ENCODE measurements at regions of chr4 and their contacts with region 1.

Region 1: DNA sequence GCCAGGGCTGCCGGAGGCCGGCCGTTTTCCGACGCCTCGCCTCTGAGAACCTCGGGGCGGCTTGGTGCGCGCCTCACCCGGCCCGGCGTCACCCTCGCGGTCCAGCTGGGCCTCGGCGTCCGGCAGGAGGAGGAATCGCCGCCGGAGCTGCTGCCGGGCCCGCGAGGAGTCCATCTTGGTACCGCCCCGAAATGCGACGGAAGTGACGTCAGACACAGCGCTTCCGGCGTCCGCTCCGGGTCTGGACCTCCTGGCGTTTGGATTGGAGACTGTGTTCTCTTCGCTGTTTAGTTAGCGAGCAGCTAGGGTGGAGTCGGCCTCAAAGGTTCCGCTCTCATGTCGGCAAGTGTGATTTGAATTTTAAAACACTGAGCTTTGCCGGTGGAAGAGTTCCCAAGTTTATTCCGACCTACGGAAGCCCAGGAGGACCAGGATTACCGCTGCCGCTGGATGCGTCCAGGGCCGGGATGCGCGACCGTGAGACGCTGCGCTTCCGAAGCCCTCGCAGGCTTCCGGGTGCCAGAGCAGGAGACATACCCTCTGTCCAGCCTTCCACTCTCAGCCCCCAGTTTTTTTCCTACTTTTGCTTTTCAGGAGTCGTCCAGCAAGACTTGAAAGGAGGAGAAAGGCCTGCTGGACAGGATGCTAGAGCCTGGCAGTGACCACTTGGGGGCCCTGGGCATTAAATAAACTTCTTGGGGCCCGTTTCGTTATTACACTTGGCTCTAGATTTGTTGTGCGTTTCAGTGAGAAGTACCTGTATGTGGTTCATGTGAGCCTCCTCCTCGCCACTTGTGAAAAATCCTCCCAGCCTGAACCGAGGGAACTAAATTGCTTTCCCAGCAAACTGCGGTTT is at the start of gene TMEM128:
- DNase-seq: peak; percentile 98
- H3K4me3 Mint-ChIP-seq: peak within 1 kb of the TSS; percentile 92
- H3K27ac Mint-ChIP-seq: peak within 1 kb of the TSS; percentile 95
- H3K4me1 Mint-ChIP-seq: peaks cover 20% of the 10 kb centered on the region
- H3K27me3 Mint-ChIP-seq: no peaks in the 10 kb centered on the region
- total RNA-seq, gene TMEM128: 18.5 and 20.7 TPM in 2 replicates

Region 2: DNA sequence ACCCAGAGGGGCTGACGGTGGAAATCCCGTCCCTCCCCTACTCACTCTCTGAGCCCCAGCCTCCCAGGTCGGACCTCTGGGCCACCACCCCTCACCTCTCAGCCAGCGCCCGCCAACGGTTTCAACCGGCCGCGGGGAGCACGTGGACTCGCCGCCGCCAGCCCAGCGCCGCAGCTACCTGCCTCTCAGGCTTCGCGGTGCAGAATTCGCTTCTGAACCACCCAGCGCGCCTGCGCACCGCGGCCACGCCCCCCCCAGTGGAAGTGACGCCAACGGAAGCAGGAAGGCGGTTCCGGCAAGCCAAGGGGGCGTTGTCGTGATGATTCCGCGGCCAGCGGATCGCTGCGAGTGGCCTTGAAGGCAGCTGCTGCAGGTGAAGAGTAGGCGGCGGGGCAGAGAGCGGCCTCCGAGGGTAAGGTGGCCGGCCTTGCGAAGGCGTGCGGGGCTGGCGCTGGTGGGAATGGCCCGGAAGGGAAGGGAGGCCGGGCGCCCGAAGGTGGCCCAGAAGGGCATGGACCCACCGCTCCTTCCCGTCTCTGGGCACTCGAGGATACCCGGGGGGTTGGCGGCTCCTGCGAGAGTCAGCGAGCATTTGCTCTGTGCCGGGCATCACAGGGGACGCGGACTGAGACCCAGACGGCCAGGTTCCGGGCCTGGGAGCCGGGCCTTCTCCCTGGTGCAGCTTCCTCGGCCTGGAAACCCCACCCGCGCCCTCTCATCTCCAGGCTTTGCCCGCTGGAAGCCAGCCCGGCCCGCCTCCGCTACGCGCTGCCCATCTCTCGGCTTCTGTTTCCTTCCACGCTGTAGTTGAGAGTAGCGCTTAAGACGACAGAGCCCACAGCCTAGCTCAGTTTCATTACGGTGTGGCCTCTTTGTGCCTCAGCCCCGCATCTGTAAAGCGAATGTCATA is 41.9 kb after region 1 on chr4 and contains the starts of genes LYAR and ZBTB49:
- intact Hi-C with region 1: loop called (anchors 1 kb)
- DNase-seq: peak; percentile 100
- H3K4me3 Mint-ChIP-seq: peak within 1 kb of the TSS; percentile 99
- H3K27ac Mint-ChIP-seq: peak within 1 kb of the TSS; percentile 95
- H3K4me1 Mint-ChIP-seq: peaks cover 41% of the 10 kb centered on the region
- H3K27me3 Mint-ChIP-seq: no peaks in the 10 kb centered on the region
- total RNA-seq, gene LYAR: 93.9 and 95.5 TPM in 2 replicates
- total RNA-seq, gene ZBTB49: 7.2 and 8.6 TPM in 2 replicates

Region 3: DNA sequence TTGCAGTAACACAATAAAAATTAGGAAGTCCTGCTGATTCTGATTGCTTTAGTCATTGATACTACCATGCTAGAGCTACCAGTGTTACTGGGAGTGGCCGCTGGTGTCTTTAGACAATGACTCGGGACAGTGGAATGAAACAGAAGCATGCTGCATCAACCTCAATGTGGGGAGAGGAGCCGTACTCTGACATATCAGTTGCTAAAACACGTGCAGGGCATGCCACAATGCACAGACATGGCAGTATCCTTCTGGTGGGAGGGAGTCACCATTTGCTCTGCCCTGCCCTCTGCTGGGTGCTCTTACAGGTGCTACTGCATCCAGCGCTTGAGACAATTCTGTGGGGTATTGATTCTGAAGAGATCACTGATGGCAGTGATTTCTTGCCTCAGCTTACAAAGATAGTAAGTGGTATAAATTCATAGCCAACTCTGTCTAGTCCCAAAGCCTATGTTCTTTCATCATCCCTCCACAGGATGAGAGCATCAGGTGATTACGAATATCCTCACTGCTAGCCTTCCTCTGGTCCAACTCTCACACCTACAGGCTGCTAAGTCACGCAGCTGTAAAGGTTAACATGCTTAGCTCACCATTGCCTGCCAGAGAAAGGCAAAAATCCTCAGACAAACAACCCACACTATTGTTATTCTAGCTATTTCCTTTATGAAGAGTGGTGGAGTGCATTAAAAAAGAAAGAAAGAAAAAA is 182.4 kb after region 1 on chr4:
- intact Hi-C with region 1: loop called (anchors 1 kb)
- DNase-seq: peak; percentile 82
- H3K4me3 Mint-ChIP-seq: no peak overlapping the region
- H3K27ac Mint-ChIP-seq: no peak overlapping the region
- H3K4me1 Mint-ChIP-seq: peaks cover 3% of the 10 kb centered on the region
- H3K27me3 Mint-ChIP-seq: no peaks in the 10 kb centered on the region